Aorta (tissue), 5 donors: ENCODE measurements at regions of chr2 and their contacts with region 1.

Region 1: GRCh38 chr2:70919672-70920366 is 15.9 kb upstream of the ATP6V1B1 start:
- DNase-seq: peak; percentile 81 to 89
- ATAC-seq: peak; percentile 82
- H3K4me3 ChIP-seq: no peak overlapping the region
- H3K27ac ChIP-seq: no peak overlapping the region
- H3K4me1 ChIP-seq: no peaks in the 10 kb centered on the region
- H3K27me3 ChIP-seq: no peaks in the 10 kb centered on the region

Region 2: DNA sequence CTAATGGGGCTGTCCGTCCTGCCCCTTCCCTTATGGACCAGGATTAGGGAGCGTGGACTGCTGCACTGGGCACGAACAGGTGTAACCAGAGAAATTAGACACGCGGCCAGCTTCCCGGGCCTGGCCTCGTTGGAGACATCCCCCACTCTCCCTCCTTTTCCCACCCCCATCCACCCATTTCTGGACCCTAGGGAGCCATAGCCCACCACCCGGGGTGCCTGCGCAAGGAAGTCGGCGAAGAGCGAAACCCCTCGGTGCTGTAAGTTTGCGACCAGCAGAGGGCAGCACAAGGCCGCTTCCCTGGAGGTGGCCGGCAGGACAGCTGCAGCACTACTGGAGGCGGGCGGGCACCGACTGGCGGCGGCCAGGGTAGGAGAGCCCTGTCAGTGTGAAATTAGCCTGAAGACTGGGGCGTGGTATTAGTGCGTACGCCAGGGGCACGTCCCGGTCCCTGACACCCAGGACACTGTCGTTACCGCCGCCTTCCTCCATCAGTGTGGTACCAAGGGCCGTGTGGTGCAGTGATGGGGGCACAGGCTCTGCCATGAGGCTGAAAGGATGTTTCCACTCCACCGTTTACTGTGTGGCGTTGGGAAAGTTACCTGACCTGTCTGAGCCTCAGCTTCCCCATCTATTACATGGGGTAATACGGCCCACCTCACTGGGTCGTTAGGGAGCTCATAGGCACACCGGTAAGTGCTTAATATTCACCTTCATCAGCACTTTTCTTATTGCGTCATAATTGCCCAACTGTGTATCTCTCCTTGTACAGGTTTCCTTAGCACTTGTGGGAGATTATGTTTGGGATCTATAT is 48.2 kb before region 1 on chr2:
- intact Hi-C with region 1: loop called in 1 of 2 experiments (anchors 5 kb)
- DNase-seq: peak; percentile 92 to 97
- ATAC-seq: peak; percentile 93
- H3K4me3 ChIP-seq: no peak overlapping the region
- H3K27ac ChIP-seq: no peak overlapping the region
- H3K4me1 ChIP-seq: no peaks in the 10 kb centered on the region
- H3K27me3 ChIP-seq: no peaks in the 10 kb centered on the region

Region 3: DNA sequence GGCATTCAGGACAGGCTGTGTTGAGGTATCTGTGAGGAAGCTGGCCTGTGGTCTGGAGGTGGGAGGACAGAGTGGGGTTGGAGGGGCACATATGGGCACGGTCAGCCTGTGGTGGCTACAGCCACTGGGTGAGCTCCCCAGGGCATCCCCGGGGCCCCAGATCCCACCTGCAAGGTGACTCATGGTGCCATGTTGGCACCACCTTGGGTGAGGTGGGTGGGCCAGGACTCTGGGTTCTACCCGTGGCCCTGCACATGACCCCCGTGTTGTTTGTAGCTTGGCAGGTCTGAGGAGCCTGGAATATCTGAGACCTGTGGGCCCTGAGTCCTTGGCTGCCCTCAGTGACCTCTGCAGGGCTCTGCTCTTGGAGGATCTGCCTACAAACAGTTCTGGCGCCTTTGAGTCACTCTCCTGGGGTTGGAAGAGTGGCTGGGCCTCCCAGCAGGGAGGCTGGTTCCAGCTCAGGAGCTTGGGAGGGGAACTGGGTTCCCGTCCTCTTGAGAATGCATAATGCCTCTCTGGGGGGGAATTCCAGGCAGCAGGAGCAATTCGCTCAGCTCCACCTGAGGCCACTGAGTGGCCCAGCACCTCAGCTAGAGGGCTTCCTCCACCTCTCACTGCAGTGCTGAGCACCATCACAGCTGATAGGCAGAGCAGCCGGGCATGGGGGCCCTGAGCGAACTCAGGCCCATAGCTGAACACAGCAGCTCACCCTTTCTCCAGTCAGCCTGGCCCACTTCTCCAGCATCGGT is 638.7 kb after region 1 on chr2:
- intact Hi-C with region 1: no loop called
- DNase-seq: peak; percentile 35 to 56
- ATAC-seq: no peak
- H3K4me3 ChIP-seq: no peak overlapping the region
- H3K27ac ChIP-seq: no peak overlapping the region
- H3K4me1 ChIP-seq: no peaks in the 10 kb centered on the region
- H3K27me3 ChIP-seq: no peaks in the 10 kb centered on the region